ENCODE measurements at regions of chr20 and their contacts with region 1.

Region 1: DNA sequence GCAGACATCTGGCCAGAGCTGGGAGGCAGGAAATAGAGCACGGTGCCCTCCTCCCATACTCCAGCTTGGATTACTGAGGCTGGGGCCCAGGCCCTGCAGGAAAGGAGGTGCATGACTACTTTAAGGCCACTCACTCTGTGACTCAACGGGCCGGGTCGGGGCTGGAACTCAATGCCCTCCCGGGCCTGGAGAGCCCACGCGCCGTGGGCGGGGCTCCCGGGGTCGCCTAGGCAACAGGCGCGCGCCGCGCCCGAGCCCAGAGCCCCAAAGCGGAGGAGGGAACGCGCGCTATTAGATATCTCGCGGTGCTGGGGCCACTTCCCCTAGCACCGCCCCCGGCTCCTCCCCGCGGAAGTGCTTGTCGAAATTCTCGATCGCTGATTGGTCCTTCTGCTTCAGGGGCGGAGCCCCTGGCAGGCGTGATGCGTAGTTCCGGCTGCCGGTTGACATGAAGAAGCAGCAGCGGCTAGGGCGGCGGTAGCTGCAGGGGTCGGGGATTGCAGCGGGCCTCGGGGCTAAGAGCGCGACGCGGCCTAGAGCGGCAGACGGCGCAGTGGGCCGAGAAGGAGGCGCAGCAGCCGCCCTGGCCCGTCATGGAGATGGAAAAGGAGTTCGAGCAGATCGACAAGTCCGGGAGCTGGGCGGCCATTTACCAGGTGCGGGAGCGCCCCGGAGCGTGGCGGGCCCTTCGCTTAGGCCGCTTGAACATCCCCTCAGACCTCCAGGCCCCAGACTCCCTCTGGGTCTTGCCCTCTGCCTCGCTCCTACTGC is at the start of gene PTPN1:
- DNase-seq: peak; percentile 100
- ATAC-seq: peak; percentile 96
- H3K4me3 ChIP-seq: peak within 1 kb of the TSS; percentile 83
- H3K27ac ChIP-seq: peak within 1 kb of the TSS; percentile 38
- H3K4me1 ChIP-seq: peaks cover 37% of the 10 kb centered on the region
- H3K27me3 ChIP-seq: no peaks in the 10 kb centered on the region
- CTCF ChIP-seq: no peak
- total RNA-seq, gene PTPN1: 47.2 and 47.7 TPM in 2 replicates

Region 2: DNA sequence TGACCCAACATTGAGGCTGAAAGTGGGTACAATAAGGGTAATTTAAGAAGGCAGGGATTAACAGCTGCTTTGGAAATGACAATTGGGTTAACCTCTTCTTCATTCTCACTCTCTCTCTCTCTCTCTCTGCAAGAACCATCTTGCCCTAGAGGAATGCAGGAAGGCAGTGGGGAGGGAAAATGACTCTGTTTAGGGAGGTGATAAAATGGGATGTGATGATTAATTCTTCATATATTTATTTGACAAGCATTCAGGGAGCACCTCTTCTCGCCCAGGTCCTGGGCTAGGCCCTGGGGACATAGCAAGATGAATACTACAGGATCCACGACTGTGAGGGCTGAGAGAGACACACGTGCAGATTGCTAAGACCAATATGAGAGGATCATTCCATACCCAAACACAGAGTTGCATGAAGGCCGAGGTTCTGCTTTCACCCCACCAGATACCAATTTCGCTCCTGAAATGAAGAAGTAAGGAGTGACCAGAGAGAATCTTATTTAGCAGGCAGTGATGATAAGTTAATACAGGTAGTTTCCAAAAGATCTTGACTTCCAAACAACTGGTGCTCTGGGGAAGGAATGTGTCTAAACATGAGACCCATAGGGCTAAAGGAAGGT is 13.2 kb before region 1 on chr20:
- CTCF ChIA-PET with region 1: no interaction called
- POLR2A ChIA-PET with region 1: interaction called, 25 read pairs
- intact Hi-C with region 1: no loop called
- DNase-seq: peak; percentile 71
- ATAC-seq: peak; percentile 57
- H3K4me3 ChIP-seq: no peak overlapping the region
- H3K27ac ChIP-seq: no peak overlapping the region
- H3K4me1 ChIP-seq: peaks cover 23% of the 10 kb centered on the region
- H3K27me3 ChIP-seq: no peaks in the 10 kb centered on the region
- CTCF ChIP-seq: no peak

Region 3: GRCh38 chr20:50561379-50562078 is 51.4 kb after region 1 on chr20:
- CTCF ChIA-PET with region 1: no interaction called
- POLR2A ChIA-PET with region 1: interaction called, 5 read pairs
- intact Hi-C with region 1: loop called (anchors 2 kb)
- DNase-seq: peak; percentile 99
- ATAC-seq: peak; percentile 92
- H3K4me3 ChIP-seq: peak overlapping the region; percentile 24; the same call in 1 of the 2 replicates
- H3K27ac ChIP-seq: peak overlapping the region; percentile 87
- H3K4me1 ChIP-seq: peaks cover 41% of the 10 kb centered on the region
- H3K27me3 ChIP-seq: no peaks in the 10 kb centered on the region
- CTCF ChIP-seq: no peak

Measured in PC-3 (cell line).